IMR-90 (cell line): ENCODE measurements at regions of chr3 and their contacts with region 1.

Region 1: GRCh38 chr3:88960019-88960418 is 147.4 kb upstream of the EPHA3 start:
- DNase-seq: no peak
- ATAC-seq: no peak
- H3K4me3 ChIP-seq: no peak overlapping the region
- H3K27ac ChIP-seq: no peak overlapping the region
- H3K4me1 ChIP-seq: peaks cover 5% of the 10 kb centered on the region; the same call in 1 of the 2 replicates
- H3K27me3 ChIP-seq: no peaks in the 10 kb centered on the region
- CTCF ChIP-seq: no peak
- POLR2A ChIP-seq: no peak
- RAD21 ChIP-seq: no peak

Region 2: DNA sequence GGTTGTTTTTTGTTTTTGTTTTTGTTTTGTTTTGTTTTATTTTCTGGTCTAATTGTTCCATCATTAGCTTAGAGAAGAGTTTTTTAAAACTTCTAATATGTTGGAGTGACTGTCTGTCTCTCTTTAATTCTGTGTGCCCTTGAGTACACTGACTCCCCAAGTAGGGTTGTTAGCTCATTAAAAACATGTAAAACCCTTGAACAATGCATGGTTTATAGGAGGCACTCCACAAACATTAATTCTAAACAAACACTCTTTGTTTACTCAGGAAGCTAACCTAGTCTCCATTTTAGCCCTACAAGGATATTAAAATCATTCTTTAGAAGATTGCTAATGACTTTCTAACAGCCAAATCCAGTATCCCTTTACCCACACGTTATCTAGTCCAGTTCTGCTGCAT is 1001.7 kb before region 1 on chr3:
- CTCF ChIA-PET with region 1: no interaction called
- POLR2A ChIA-PET with region 1: no interaction called
- dilution Hi-C with region 1: no loop called
- in situ Hi-C with region 1: no loop called
- intact Hi-C with region 1: no loop called
- DNase-seq: no peak
- ATAC-seq: no peak
- H3K4me3 ChIP-seq: no peak overlapping the region
- H3K27ac ChIP-seq: no peak overlapping the region
- H3K4me1 ChIP-seq: no peaks in the 10 kb centered on the region
- H3K27me3 ChIP-seq: no peaks in the 10 kb centered on the region
- CTCF ChIP-seq: no peak
- POLR2A ChIP-seq: no peak
- RAD21 ChIP-seq: no peak

Region 3: GRCh38 chr3:88986834-88987233 is 26.8 kb after region 1 on chr3:
- CTCF ChIA-PET with region 1: no interaction called
- POLR2A ChIA-PET with region 1: interaction called, 17 read pairs
- dilution Hi-C with region 1: no loop called
- in situ Hi-C with region 1: no loop called
- intact Hi-C with region 1: no loop called
- DNase-seq: peak; percentile 65
- ATAC-seq: peak; percentile 57
- H3K4me3 ChIP-seq: no peak overlapping the region
- H3K27ac ChIP-seq: no peak overlapping the region
- H3K4me1 ChIP-seq: no peaks in the 10 kb centered on the region; the same call in 1 of the 2 replicates
- H3K27me3 ChIP-seq: no peaks in the 10 kb centered on the region
- CTCF ChIP-seq: no peak
- POLR2A ChIP-seq: no peak
- RAD21 ChIP-seq: no peak

Region 4: GRCh38 chr3:89059211-89059925 is 99.3 kb after region 1 on chr3:
- CTCF ChIA-PET with region 1: no interaction called
- POLR2A ChIA-PET with region 1: no interaction called
- dilution Hi-C with region 1: no loop called
- in situ Hi-C with region 1: no loop called
- intact Hi-C with region 1: no loop called
- DNase-seq: no peak
- ATAC-seq: no peak
- H3K4me3 ChIP-seq: no peak overlapping the region
- H3K27ac ChIP-seq: no peak overlapping the region
- H3K4me1 ChIP-seq: no peaks in the 10 kb centered on the region
- H3K27me3 ChIP-seq: no peaks in the 10 kb centered on the region
- CTCF ChIP-seq: no peak
- POLR2A ChIP-seq: no peak
- RAD21 ChIP-seq: no peak